ENCODE measurements at regions of chr16 and their contacts with region 1.

Region 1: DNA sequence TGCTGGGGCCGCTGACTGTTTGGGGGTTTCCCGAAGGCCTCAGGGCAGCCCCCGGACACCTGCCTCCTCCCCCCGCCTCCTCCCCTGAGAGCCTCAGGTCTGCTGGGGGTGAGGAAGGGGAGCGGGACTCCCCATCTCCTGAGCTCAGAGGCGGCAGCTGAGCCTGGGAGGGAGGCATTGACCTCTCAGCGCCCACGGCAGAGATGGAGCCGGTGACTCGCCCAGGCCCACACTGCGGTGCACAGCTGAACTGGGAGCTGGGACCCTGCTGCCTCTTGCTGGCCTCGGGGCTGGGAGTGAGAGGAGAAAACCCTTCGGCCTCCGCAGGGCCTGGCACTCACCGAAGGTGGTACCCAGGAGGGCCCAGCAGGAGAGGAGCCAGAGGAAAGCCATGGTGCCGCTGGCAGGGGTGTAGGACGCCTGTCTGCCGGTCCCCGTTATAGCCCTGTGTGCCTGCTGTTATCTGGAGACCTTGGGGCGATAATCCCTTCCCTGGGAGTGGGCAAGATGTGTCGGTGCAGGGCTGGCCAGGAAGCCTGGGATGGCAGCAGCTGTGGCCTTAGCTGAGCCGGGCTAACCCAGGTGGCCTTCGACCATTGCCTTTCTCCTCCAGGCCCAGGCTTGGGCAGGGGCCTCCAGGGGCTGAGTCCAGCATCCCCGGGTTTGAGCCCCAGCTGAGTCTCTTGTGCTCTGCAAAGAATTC is at the start of gene CTRB2:
- DNase-seq: no peak
- ATAC-seq: no peak
- H3K4me3 ChIP-seq: no peak within 1 kb of the TSS
- H3K4me3 Mint-ChIP-seq: no peak within 1 kb of the TSS
- H3K27ac ChIP-seq: no peak within 1 kb of the TSS
- H3K27ac Mint-ChIP-seq: no peak within 1 kb of the TSS
- H3K4me1 ChIP-seq: peaks cover 3% of the 10 kb centered on the region
- H3K4me1 Mint-ChIP-seq: peaks cover 2% of the 10 kb centered on the region
- H3K27me3 ChIP-seq: no peaks in the 10 kb centered on the region
- H3K27me3 Mint-ChIP-seq: no peaks in the 10 kb centered on the region
- CTCF ChIP-seq: no peak
- total RNA-seq, gene CTRB2: not detected

Region 2: GRCh38 chr16:74811911-74812310 is 395.0 kb before region 1 on chr16:
- CTCF ChIA-PET with region 1: no interaction called
- POLR2A ChIA-PET with region 1: no interaction called
- intact Hi-C with region 1: no loop called
- DNase-seq: no peak
- ATAC-seq: no peak
- H3K4me3 ChIP-seq: no peak overlapping the region
- H3K4me3 Mint-ChIP-seq: no peak overlapping the region
- H3K27ac ChIP-seq: no peak overlapping the region
- H3K27ac Mint-ChIP-seq: no peak overlapping the region
- H3K4me1 ChIP-seq: peaks cover 3% of the 10 kb centered on the region
- H3K4me1 Mint-ChIP-seq: peaks cover 4% of the 10 kb centered on the region
- H3K27me3 ChIP-seq: no peaks in the 10 kb centered on the region
- H3K27me3 Mint-ChIP-seq: no peaks in the 10 kb centered on the region
- CTCF ChIP-seq: no peak

Region 3: DNA sequence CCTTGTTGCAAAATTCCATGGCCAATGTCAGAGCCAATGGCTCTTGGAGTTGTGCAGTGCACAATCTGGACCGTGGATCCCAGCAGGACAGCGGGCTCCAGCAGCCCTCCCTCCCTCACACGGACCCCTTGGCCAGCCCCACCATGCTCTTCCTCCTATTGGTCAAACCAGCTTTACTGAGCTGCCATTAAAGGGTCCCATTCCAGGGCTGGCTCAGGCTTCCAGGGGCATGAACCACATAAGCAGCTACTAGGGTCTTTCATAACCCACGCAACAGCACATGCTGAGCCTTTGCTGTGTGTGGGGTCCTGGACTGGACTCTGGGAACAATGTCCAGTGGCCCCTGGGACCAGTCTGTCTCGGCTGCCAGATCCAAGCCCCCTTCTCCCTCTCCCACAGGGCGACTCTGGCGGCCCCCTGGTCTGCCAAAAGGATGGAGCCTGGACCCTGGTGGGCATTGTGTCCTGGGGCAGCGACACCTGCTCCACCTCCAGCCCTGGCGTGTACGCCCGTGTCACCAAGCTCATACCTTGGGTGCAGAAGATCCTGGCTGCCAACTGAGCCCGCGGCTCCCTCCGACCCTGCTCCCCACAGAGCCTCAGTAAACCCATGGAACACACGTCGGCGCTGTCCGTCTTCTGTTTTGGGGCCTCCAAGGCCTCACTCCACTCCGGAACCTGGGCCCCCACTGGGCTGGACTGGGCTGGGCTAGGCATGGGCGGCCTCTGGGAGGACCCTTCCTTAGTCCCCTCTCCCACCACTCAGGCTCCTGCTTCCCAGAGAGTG is 17.6 kb after region 1 on chr16:
- CTCF ChIA-PET with region 1: no interaction called
- POLR2A ChIA-PET with region 1: no interaction called
- intact Hi-C with region 1: loop called in 1 of 2 experiments (anchors 2 kb)
- DNase-seq: no peak
- ATAC-seq: no peak
- H3K4me3 ChIP-seq: no peak overlapping the region
- H3K4me3 Mint-ChIP-seq: no peak overlapping the region
- H3K27ac ChIP-seq: no peak overlapping the region
- H3K27ac Mint-ChIP-seq: no peak overlapping the region
- H3K4me1 ChIP-seq: peaks cover 1% of the 10 kb centered on the region
- H3K4me1 Mint-ChIP-seq: peaks cover 7% of the 10 kb centered on the region
- H3K27me3 ChIP-seq: no peaks in the 10 kb centered on the region
- H3K27me3 Mint-ChIP-seq: peaks cover 7% of the 10 kb centered on the region
- CTCF ChIP-seq: no peak